ENCODE measurements at regions of chr9 and their contacts with region 1.

Region 1: DNA sequence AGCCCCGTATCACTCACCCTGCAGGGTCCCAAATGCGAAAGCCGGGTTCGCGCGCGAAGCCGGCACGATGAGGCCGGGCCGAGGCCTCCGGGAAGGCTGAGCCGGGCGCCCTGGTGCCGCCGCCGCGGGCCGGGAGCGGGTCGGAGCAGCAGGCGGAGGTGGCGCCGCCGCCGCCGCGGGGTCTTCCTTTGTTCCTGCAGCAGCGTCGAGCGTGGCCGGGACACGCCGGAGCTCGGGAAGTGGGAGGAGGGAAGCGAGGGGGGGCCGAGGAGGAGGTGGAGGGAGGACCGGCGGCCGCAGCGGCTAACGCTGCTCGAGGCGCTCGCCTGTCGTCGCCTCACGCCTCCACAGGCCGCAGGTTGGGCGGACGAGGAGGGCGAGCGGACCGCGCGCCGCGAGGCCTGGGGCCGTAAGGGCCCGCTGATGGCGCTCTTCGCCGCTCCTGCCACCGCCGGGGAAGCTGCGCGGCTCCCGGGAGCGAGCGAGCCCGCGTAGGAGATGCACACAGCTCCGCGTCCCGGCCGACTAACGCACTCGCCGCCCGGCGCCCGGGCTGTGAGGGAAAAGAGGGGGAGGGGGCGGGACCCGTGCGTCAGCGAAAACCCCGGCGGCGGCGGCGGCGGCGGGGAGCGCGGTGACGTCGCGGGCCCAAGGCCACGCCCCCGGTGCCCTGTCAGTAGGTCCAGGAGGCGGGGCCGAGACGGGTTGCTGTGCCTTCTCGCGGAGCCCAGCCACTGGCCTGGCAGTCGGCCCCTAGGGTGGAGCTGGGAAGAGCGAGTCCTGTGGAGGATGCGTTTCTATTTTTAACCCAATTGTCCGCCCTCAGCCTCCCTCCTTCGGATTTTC is at the start of gene ZFAND5:
- DNase-seq: peak; percentile 98
- ATAC-seq: peak; percentile 90
- H3K4me3 ChIP-seq: peak within 1 kb of the TSS; percentile 99
- H3K27ac ChIP-seq: peak within 1 kb of the TSS; percentile 93
- H3K4me1 ChIP-seq: peaks cover 2% of the 10 kb centered on the region; the same call in 1 of the 2 replicates
- H3K27me3 ChIP-seq: no peaks in the 10 kb centered on the region
- CTCF ChIP-seq: peak; percentile 26; the same call in 1 of the 2 replicates
- POLR2A ChIP-seq: peak; percentile 99
- RAD21 ChIP-seq: peak; percentile 52
- total RNA-seq, gene ZFAND5: 35.8 and 53.3 TPM in 2 replicates

Region 2: GRCh38 chr9:72428329-72428728 is 63.4 kb after region 1 on chr9:
- CTCF ChIA-PET with region 1: no interaction called
- POLR2A ChIA-PET with region 1: no interaction called
- dilution Hi-C with region 1: no loop called
- in situ Hi-C with region 1: no loop called
- intact Hi-C with region 1: no loop called
- DNase-seq: peak; percentile 60
- ATAC-seq: peak; percentile 84
- H3K4me3 ChIP-seq: no peak overlapping the region
- H3K27ac ChIP-seq: no peak overlapping the region
- H3K4me1 ChIP-seq: peaks cover 2% of the 10 kb centered on the region; the same call in 1 of the 2 replicates
- H3K27me3 ChIP-seq: no peaks in the 10 kb centered on the region
- CTCF ChIP-seq: no peak
- POLR2A ChIP-seq: no peak
- RAD21 ChIP-seq: no peak

Region 3: DNA sequence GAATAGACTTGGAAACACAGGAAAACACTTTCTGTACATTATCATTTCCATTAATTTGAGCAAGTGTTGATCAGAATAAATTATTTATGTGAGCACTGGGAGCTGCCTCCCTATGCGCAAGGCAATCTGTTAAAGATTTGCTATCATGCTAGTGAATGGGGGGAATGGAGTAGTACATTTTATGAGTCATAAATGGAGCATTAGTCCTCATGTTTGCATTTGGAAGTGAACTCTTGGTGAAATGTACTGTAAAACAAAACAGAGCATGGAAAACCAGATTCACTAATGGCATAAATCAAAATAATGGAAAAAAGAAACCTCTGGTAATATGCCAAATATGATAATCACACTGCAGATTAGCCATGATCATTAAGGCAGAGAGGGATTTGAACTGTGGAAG is 116.0 kb after region 1 on chr9:
- CTCF ChIA-PET with region 1: no interaction called
- POLR2A ChIA-PET with region 1: interaction called, 3 read pairs
- dilution Hi-C with region 1: no loop called
- in situ Hi-C with region 1: no loop called
- intact Hi-C with region 1: loop called (anchors 2 kb)
- DNase-seq: peak; percentile 63
- ATAC-seq: peak; percentile 61
- H3K4me3 ChIP-seq: no peak overlapping the region
- H3K27ac ChIP-seq: no peak overlapping the region
- H3K4me1 ChIP-seq: peaks cover 23% of the 10 kb centered on the region
- H3K27me3 ChIP-seq: no peaks in the 10 kb centered on the region
- CTCF ChIP-seq: no peak
- POLR2A ChIP-seq: no peak
- RAD21 ChIP-seq: no peak

Region 4: GRCh38 chr9:72540348-72540873 is 175.5 kb after region 1 on chr9:
- CTCF ChIA-PET with region 1: no interaction called
- POLR2A ChIA-PET with region 1: interaction called, 10 read pairs
- dilution Hi-C with region 1: no loop called
- in situ Hi-C with region 1: no loop called
- intact Hi-C with region 1: no loop called
- DNase-seq: peak; percentile 49
- ATAC-seq: peak; percentile 28; the same call in 1 of the 2 replicates
- H3K4me3 ChIP-seq: no peak overlapping the region
- H3K27ac ChIP-seq: no peak overlapping the region
- H3K4me1 ChIP-seq: no peaks in the 10 kb centered on the region; the same call in 1 of the 2 replicates
- H3K27me3 ChIP-seq: no peaks in the 10 kb centered on the region
- CTCF ChIP-seq: no peak
- POLR2A ChIP-seq: no peak
- RAD21 ChIP-seq: no peak

Region 5: DNA sequence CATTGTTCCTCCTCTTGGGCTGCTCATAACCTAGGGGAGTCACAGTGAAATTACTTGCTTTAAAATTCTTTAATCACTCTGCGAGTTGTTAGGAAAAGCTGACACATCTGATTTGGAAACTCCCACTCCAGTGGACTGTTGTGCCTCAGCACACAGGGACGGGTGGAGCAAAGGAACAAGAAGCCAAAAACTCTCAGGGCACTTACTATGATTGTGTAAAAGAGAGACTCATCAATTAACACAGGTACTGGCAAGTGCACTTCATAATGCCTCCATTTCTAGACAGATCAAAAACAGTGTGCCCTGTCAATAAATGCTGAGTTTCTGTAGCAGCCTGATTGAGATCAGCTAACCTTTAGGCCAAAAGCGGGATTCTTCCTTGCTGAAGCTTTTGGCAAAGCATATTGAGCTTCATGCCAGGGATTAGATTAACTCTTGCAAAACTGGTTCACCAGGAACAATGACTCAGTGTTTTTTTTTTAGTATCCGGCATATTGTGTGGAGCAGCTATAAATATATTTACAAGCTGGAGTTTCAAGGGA is 212.4 kb after region 1 on chr9:
- CTCF ChIA-PET with region 1: no interaction called
- POLR2A ChIA-PET with region 1: interaction called, 27 read pairs
- dilution Hi-C with region 1: no loop called
- in situ Hi-C with region 1: no loop called
- intact Hi-C with region 1: no loop called
- DNase-seq: peak; percentile 85
- ATAC-seq: peak; percentile 8; the same call in 1 of the 2 replicates
- H3K4me3 ChIP-seq: no peak overlapping the region
- H3K27ac ChIP-seq: peak overlapping the region; percentile 85
- H3K4me1 ChIP-seq: peaks cover 28% of the 10 kb centered on the region
- H3K27me3 ChIP-seq: no peaks in the 10 kb centered on the region
- CTCF ChIP-seq: no peak
- POLR2A ChIP-seq: no peak
- RAD21 ChIP-seq: no peak

Region 6: DNA sequence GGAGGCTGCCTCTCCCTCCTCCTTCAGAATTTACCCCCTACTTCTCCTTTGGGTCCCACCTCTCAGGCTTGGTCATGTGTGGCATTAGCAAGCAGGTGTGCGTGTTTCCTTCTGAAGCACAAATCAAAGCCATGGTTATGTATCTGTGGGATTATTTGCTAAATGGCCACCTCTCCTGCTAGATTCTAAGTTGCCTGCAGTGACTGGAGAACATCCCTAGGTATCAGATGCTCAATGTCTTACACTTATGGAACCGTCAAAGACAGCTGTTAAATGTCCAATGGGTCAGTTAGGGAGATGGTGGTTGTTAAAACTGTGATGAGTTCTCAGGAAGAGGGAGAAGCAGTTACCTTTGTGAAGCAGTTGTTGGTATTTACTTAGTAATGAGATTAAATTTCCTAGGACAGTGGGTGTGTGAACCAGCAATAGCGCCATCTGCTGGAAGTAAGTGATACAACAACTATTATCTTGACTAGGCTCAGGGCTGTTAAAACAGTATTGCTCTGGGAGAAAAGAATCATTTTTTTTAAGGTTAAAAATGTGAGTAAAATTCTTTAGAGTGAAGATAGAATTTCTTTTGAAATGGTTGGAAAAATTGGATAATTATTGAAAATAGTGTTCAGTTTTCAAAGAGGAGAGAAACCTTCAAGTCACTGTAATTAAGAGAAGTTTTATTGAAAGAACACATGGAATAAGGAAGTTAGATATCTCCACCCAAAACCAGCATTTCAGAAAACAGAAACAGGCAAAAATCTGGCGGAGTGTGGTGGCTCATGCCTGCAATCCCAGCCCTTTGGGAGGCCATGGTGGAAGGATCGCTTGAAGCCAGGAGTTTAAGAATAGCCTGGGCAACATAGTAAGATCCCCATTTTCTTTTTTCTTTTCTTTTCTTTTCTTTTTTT is 227.9 kb after region 1 on chr9:
- CTCF ChIA-PET with region 1: no interaction called
- POLR2A ChIA-PET with region 1: interaction called, 12 read pairs
- dilution Hi-C with region 1: no loop called
- in situ Hi-C with region 1: loop called (anchors 5 kb)
- intact Hi-C with region 1: loop called (anchors 1 kb)
- DNase-seq: peak; percentile 72
- ATAC-seq: peak; percentile 88
- H3K4me3 ChIP-seq: no peak overlapping the region
- H3K27ac ChIP-seq: no peak overlapping the region; the same call in 1 of the 2 replicates
- H3K4me1 ChIP-seq: peaks cover 5% of the 10 kb centered on the region
- H3K27me3 ChIP-seq: no peaks in the 10 kb centered on the region
- CTCF ChIP-seq: peak; percentile 83
- POLR2A ChIP-seq: no peak
- RAD21 ChIP-seq: peak; percentile 91

Region 7: DNA sequence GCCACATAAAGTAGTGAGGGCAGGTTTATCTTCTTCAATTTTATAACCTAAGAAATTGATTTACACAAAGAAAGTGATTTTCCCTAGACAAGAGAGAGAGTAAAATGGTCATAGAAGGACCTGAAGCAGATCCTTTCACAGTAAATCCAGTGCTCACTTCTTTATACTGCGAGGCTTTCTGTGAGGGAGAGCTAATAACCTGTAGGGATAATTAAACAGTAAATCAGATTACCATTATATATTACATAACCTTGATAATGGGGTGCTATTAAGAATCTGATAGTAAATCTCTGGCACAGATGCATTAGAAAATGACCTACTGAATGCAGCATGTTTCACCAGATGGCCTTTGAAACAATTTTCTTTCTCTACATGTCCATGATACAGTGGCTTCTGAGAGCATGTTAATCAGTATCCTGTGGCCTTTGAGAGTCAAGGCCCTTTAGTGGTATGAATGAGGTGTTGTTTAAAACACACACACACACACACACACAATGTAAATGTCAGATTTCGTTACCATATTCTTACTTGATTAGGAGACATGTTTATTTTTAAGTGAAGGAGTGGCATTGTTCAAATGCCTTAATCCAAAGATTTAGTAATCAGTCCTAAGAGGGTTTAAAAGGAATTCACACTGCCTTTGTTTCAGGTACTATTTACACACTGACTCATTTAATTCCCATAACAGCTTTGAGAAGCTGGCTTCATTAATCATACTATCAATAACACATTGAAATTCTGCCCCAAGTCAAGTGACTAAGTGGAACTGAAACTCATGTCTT is 463.2 kb after region 1 on chr9:
- CTCF ChIA-PET with region 1: no interaction called
- POLR2A ChIA-PET with region 1: no interaction called
- dilution Hi-C with region 1: no loop called
- in situ Hi-C with region 1: no loop called
- intact Hi-C with region 1: loop called (anchors 5 kb)
- DNase-seq: no peak
- ATAC-seq: no peak
- H3K4me3 ChIP-seq: no peak overlapping the region
- H3K27ac ChIP-seq: no peak overlapping the region
- H3K4me1 ChIP-seq: no peaks in the 10 kb centered on the region
- H3K27me3 ChIP-seq: no peaks in the 10 kb centered on the region; the same call in 1 of the 2 replicates
- CTCF ChIP-seq: no peak
- POLR2A ChIP-seq: no peak
- RAD21 ChIP-seq: no peak